ENCODE measurements at regions of chr9 and their contacts with region 1.

Region 1: GRCh38 chr9:133144137-133144903 is 19.4 kb downstream of the GBGT1 start:
- DNase-seq: peak in 1 of 2 experiments; percentile 94
- H3K4me3 ChIP-seq: peak overlapping the region; percentile 9 to 60 (median 47); a peak in 6 of 8 replicates
- H3K27ac ChIP-seq: peak overlapping the region; percentile 16; the same call in 1 of the 2 replicates
- H3K4me1 ChIP-seq: peaks cover 0 to 21% (median 12%) of the 10 kb centered on the region in 4 experiments; a peak in 5 of 7 replicates
- H3K27me3 ChIP-seq: peaks cover 0 to 11% (median 0%) of the 10 kb centered on the region in 4 experiments; a peak in 2 of 7 replicates
- CTCF ChIP-seq: peak in 2 of 3 experiments; percentile 98 to 99; a peak in 3 of 4 replicates
- EP300 ChIP-seq: peak in 1 of 2 experiments; percentile 5; a peak in 1 of 3 replicates
- POLR2A ChIP-seq: peak in 1 of 2 experiments; percentile 47; a peak in 1 of 3 replicates
- RAD21 ChIP-seq: peak; percentile 70 to 83

Region 2: DNA sequence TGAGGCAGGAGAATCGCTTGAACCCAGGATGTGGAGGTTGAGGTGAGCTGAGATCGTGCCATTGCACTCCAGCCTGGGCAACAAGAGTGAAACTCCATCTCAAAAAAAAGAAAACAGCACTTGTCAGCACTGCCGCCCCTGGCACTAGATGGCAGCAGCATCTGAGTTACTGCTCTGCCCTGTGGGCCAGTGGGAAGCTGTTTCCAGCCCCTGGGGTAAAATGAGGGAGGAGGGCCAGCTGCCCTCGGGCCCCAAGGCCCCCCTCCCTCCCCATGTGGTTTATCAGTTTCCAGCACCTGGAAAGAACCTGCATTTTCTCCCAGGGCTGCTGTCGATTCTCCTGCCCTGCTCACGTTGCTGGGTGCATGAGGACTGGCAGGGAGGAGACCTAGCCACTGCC is 95.8 kb before region 1 on chr9:
- CTCF ChIA-PET with region 1: interaction called, 23 read pairs
- POLR2A ChIA-PET with region 1: no interaction called
- DNase-seq: no peak
- H3K4me3 ChIP-seq: no peak overlapping the region
- H3K27ac ChIP-seq: no peak overlapping the region
- H3K4me1 ChIP-seq: no peaks in the 10 kb centered on the region
- H3K27me3 ChIP-seq: no peaks in the 10 kb centered on the region
- CTCF ChIP-seq: peak; percentile 38 to 59 (median 55)
- EP300 ChIP-seq: no peak
- POLR2A ChIP-seq: no peak
- RAD21 ChIP-seq: peak; percentile 44 to 65

Region 3: DNA sequence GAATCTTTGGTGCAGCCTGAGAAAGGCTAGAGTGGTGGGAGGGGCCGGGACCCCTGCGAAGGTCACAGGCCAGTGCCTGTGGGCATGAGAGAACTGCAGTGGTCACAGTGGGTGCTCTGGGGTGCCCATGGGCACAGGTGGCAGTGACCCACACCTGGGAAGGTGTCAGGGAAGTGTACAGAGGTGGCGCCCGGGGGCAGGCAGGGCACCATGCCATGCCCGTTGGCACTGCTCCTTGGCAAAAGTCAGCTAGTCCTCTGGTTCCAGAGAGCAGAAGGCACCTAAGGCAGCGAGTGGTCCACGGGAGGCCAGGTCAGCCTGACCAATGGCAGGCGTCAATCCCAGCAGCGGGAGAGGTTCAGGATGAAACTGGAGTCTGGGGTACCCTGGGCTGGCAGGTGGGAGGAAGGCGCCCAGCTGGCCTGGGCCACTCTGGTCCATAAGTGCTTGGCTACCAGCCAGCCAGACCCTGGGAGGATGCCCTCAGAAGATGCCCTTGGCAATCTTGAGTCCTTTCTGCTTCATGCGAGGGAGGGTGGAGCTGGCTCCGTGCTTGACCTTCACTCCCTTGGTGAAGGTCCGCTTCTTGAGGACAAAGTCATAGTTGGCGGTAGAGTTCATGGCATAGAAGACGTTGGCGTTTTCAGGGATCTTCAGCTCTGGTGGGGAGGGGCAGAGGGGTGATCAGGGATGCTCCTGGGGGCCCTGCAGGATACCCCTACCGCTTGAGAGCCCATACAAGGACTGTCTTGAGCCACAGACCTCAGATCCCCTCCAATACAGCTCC is 46.0 kb before region 1 on chr9:
- CTCF ChIA-PET with region 1: interaction called, 337 read pairs
- POLR2A ChIA-PET with region 1: interaction called, 7 read pairs
- DNase-seq: no peak
- H3K4me3 ChIP-seq: no peak overlapping the region
- H3K27ac ChIP-seq: no peak overlapping the region
- H3K4me1 ChIP-seq: no peaks in the 10 kb centered on the region
- H3K27me3 ChIP-seq: no peaks in the 10 kb centered on the region
- CTCF ChIP-seq: no peak
- EP300 ChIP-seq: no peak
- POLR2A ChIP-seq: no peak
- RAD21 ChIP-seq: no peak

Region 4: DNA sequence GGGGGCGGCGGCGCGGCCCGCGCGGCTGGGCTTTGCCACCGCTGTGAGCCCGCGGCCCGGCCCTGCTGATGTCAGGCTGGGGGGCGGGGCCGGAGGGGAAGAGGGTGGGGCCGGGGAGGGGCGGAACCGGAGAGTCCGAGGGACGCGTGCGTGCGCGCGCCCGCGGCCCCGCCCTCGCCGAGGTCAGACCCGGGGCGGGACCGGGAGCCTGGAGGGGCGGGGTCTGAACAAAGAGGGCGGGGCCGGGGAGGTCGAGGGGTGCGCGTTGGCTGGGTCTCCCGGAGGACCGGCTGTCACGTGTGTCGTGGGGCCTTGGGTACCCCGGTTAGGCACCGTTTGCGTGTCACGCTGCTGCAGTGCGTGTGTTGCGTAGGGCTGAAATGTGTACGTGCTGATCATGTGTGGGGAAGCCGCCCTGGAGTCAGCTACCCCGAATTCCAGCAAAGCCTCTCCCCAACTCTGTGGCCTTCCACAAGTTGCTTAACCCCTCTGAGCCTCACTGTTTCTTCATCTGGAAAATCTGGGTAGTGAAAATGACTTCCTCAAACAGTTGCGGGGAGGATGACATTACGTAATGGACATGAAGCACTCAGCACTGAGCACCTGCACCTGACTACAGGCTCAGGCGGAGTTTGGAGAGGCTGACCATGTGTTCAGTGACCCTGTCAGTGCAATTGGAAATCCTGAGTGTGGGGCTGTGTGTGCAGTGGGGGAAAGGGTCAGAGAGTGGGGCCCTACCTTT is 23.0 kb before region 1 on chr9 and contains the start of gene RALGDS:
- CTCF ChIA-PET with region 1: interaction called, 337 read pairs
- POLR2A ChIA-PET with region 1: interaction called, 13 read pairs
- DNase-seq: peak; percentile 38 to 94
- H3K4me3 ChIP-seq: peak within 1 kb of the TSS; percentile 51 to 79 (median 56)
- H3K27ac ChIP-seq: no peak within 1 kb of the TSS
- H3K4me1 ChIP-seq: peaks cover 0 to 17% (median 6%) of the 10 kb centered on the region in 4 experiments; a peak in 6 of 7 replicates
- H3K27me3 ChIP-seq: peaks cover 0 to 48% (median 33%) of the 10 kb centered on the region in 4 experiments; a peak in 5 of 7 replicates
- CTCF ChIP-seq: no peak
- EP300 ChIP-seq: no peak
- POLR2A ChIP-seq: no peak
- RAD21 ChIP-seq: no peak
- total RNA-seq, gene RALGDS: 11.2 and 14.5 TPM in 2 replicates

Region 5: DNA sequence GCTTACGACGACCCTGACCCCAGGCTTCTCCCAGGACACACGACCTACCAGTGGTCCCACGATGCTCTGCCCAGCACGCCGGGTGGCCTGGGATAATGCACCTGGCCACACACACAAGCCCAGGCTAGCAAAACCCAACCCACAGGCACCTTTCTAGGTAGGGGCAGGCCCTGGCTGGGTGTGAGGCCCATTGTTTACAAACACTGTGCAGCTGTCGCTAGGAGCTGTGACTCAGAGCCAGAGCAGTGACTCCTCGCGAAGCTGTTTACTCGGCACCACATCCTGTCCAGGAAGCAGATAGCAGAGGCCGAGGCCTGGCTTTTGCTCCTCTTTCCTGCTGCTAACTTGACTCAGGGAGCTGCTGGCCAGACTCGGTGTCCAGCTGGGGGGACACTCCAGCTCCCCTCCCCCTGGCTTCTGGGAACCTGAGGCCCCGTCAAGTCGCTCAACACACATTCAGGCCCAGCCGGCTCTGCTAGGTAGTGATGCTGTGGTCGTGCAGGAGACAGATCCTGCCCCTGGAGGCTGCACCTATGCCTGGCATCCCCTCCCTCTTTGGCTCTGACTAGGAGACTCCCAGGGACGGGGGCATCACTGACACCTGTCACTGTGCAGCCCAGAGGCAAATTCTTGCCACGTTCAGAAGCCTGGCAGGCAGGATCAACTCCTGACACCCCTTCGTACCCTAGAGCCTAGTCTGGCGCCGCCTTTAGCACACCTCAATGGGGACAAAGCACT is 10.5 kb before region 1 on chr9:
- CTCF ChIA-PET with region 1: interaction called, 67 read pairs
- POLR2A ChIA-PET with region 1: interaction called, 12 read pairs
- DNase-seq: no peak
- H3K4me3 ChIP-seq: no peak overlapping the region
- H3K27ac ChIP-seq: peak overlapping the region; percentile 80
- H3K4me1 ChIP-seq: peaks cover 0 to 13% (median 10%) of the 10 kb centered on the region in 4 experiments; a peak in 5 of 7 replicates
- H3K27me3 ChIP-seq: no peaks in the 10 kb centered on the region; a peak in 1 of 7 replicates
- CTCF ChIP-seq: no peak
- EP300 ChIP-seq: 0 out of 3 replicates have a peak, but pooled peaks of 1 of the 2 experiments have one; percentile 10
- POLR2A ChIP-seq: no peak
- RAD21 ChIP-seq: no peak

Measured in H1 (cell line).